GM10248 (cell line): ENCODE measurements at regions of chr10 and their contacts with region 1.

Region 1: DNA sequence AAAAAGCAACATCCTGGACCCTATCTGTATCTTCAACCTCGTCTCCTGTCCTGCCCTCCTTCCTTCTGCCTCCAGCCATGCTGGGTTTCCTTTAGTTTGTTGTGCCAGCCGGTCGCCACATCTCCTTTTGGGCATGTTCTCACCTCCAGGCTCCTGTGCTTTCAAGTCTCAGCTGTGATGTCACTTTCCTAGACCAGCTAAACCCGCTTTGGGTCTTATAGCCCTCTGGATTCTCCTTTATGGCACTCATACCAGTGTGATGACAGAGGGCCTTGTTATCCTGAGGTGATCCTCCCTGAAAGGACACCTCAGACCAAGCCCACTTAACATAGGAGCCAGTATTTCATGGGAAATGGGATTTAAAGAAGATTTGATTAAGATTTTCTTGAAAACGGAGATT is 108.6 kb downstream of the EMX2 start:
- DNase-seq: no peak
- CTCF ChIP-seq: no peak

Region 2: DNA sequence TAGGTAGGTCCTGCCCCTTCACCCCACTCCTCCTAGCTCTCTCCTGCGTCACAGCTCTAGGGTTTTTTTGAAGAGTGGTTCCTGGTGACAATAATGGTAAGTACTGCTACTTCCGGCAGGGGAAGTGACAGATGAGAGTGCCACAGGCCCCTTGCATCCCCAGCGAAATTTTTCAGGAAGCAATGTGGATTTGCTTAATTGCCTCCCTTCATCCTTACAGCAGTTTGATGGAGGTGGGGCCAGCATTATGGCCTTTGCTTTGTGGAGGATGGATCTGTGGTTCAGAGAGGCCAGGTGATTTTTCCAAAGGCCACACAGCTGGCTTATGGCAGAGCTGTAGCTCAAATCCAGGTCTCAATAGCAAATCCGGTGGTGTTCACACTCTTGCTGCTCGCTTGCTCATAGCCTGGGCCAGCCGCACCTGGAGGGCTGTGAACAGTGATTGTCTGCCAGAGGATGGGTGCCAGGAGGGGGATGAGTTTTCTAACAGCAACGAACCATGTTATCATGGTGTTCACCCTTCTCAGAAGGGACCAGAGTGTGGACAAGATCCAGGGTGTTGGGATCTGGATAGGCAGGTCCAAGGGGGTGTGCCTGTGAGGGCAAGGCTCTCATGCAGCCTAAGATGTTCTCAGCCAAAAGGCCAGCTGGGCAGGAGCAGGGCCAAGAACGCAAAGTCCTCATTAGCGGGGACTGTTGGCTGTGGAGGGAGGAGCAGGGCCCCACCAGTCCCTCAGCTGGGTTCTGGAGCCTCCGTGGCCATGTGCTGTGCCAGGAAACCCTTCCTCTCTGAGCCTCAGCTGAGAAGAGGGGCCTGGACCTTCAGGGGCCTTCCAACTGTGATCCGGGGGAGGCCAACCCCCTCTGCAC is 19.6 kb before region 1 on chr10:
- CTCF ChIA-PET with region 1: interaction called, 11 read pairs
- POLR2A ChIA-PET with region 1: no interaction called
- DNase-seq: no peak
- CTCF ChIP-seq: no peak